ENCODE measurements at regions of chr3 and their contacts with region 1.

Region 1: GRCh38 chr3:87298111-87298718 is 21.8 kb upstream of the POU1F1 start:
- DNase-seq: no peak
- H3K4me3 Mint-ChIP-seq: no peak overlapping the region
- H3K27ac Mint-ChIP-seq: no peak overlapping the region
- H3K4me1 Mint-ChIP-seq: no peaks in the 10 kb centered on the region
- H3K27me3 Mint-ChIP-seq: peaks cover 11% of the 10 kb centered on the region

Region 2: DNA sequence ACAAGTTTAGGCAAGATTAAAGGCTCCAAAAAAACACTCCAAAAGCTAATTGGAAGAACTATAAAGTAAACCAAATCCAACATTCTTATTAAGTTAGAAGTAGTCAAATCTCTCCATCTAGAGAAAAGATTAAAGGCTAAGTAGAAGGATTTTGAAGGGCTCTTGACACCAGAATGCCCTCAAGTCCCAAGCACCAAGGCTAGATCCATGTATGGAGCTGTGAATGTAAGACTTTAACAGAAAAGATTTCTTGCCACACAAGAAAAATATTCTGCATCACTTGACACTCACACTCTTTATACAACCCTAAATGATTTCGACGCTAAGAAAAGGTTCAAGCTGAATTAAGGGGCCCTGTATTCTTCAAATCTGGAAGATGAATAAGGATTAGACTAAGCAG is 652.5 kb before region 1 on chr3:
- intact Hi-C with region 1: no loop called
- DNase-seq: no peak
- H3K4me3 Mint-ChIP-seq: no peak overlapping the region
- H3K27ac Mint-ChIP-seq: no peak overlapping the region
- H3K4me1 Mint-ChIP-seq: no peaks in the 10 kb centered on the region
- H3K27me3 Mint-ChIP-seq: no peaks in the 10 kb centered on the region

Region 3: DNA sequence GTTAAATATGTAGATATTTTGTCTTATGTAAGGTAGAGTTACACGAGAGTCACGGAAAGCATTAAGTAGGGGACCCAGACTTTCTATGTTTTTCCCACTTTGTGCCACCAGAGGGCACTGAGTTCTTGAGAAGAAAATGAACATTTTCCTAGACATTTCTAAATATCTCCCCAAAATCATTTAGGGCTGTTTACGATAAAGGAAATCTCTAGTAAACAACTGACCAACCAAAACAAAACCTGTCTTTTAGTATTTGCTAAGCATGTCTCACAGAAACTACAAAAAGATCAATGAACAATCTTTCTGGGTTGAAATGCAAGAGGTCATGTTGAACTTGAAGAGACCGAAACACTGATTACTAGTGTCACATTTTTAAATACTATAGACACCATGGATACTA is 37.9 kb before region 1 on chr3:
- intact Hi-C with region 1: loop called (anchors 5 kb)
- DNase-seq: no peak
- H3K4me3 Mint-ChIP-seq: no peak overlapping the region
- H3K27ac Mint-ChIP-seq: no peak overlapping the region
- H3K4me1 Mint-ChIP-seq: peaks cover 7% of the 10 kb centered on the region
- H3K27me3 Mint-ChIP-seq: peaks cover 8% of the 10 kb centered on the region

Region 4: GRCh38 chr3:87350364-87351199 is 52.4 kb after region 1 on chr3:
- intact Hi-C with region 1: loop called (anchors 1 kb)
- DNase-seq: no peak
- H3K4me3 Mint-ChIP-seq: no peak overlapping the region
- H3K27ac Mint-ChIP-seq: no peak overlapping the region
- H3K4me1 Mint-ChIP-seq: no peaks in the 10 kb centered on the region
- H3K27me3 Mint-ChIP-seq: peaks cover 9% of the 10 kb centered on the region

Region 5: GRCh38 chr3:87503900-87504508 is 205.8 kb after region 1 on chr3:
- intact Hi-C with region 1: loop called (anchors 1 kb)
- DNase-seq: no peak
- H3K4me3 Mint-ChIP-seq: no peak overlapping the region
- H3K27ac Mint-ChIP-seq: no peak overlapping the region
- H3K4me1 Mint-ChIP-seq: no peaks in the 10 kb centered on the region
- H3K27me3 Mint-ChIP-seq: no peaks in the 10 kb centered on the region

Region 6: DNA sequence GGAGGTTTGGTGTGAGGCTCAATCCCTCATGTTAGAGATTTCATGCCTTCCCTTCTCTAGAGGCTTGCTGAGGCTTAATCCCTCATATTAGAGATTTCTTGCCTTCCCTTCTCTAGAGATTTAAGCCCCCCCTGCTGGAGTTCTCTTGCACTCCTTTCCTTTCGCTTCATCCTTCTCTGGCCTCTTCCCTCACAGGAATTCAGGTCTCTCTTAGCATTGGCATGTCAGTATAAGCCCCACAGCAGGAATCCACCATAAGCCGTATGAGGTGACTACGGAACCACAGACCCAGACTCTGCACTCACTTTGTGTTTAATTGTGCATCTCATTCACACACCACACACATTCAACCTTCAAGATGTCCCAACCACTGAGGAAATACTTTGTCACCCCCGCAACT is 316.8 kb after region 1 on chr3:
- intact Hi-C with region 1: no loop called
- DNase-seq: no peak
- H3K4me3 Mint-ChIP-seq: no peak overlapping the region
- H3K27ac Mint-ChIP-seq: no peak overlapping the region
- H3K4me1 Mint-ChIP-seq: no peaks in the 10 kb centered on the region
- H3K27me3 Mint-ChIP-seq: no peaks in the 10 kb centered on the region